Adrenal gland (tissue), 19 donors: ENCODE measurements at regions of chr2 and their contacts with region 1.

Region 1: GRCh38 chr2:166539340-166540162 is 45.5 kb upstream of the SCN7A start:
- DNase-seq: peak; percentile 12 to 53 (median 32)
- H3K4me3 ChIP-seq: no peak overlapping the region
- H3K27ac ChIP-seq: no peak overlapping the region
- H3K4me1 ChIP-seq: no peaks in the 10 kb centered on the region
- H3K27me3 ChIP-seq: no peaks in the 10 kb centered on the region
- CTCF ChIP-seq: peak; percentile 47 to 83 (median 74)
- POLR2A ChIP-seq: no peak

Region 2: GRCh38 chr2:165985120-165985519 is 554.4 kb before region 1 on chr2:
- intact Hi-C with region 1: no loop called
- DNase-seq: no peak
- H3K4me3 ChIP-seq: no peak overlapping the region
- H3K27ac ChIP-seq: no peak overlapping the region
- H3K4me1 ChIP-seq: no peaks in the 10 kb centered on the region
- H3K27me3 ChIP-seq: no peaks in the 10 kb centered on the region
- CTCF ChIP-seq: no peak
- POLR2A ChIP-seq: no peak

Region 3: DNA sequence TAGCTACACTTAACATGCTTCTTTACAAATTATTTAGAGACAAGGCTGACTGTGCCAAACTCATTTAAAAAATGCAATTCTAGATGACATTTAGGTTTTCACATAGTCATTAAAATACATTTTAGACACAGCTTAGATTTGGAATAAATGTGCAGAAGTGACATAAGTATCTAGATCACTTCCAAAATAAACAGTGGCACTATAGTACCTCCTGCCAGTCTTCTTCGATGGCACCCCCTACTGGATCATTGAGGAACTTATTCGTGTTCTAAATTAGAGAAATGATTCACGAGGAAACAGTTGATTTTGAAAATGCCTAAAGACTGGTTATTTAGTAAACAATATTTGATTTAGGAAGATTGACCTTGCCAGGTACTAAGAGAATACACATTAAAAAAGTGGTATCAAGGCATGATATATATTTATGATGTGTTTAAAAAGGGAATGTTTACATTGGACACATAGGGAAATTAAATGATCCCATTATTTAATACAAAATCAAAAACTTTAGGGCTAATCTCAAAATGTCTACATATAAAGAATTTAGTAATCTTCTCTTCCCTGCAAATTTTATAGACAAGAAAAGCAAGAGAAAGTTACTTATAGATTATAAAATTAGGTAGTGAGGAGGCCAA is 672.6 kb after region 1 on chr2:
- intact Hi-C with region 1: loop called in 1 of 2 experiments (anchors 10 kb)
- DNase-seq: peak; percentile 16 to 54 (median 37)
- H3K4me3 ChIP-seq: no peak overlapping the region
- H3K27ac ChIP-seq: no peak overlapping the region
- H3K4me1 ChIP-seq: no peaks in the 10 kb centered on the region
- H3K27me3 ChIP-seq: no peaks in the 10 kb centered on the region
- CTCF ChIP-seq: peak; percentile 43 to 75 (median 58)
- POLR2A ChIP-seq: no peak